ENCODE measurements at regions of chr10 and their contacts with region 1.

Region 1: DNA sequence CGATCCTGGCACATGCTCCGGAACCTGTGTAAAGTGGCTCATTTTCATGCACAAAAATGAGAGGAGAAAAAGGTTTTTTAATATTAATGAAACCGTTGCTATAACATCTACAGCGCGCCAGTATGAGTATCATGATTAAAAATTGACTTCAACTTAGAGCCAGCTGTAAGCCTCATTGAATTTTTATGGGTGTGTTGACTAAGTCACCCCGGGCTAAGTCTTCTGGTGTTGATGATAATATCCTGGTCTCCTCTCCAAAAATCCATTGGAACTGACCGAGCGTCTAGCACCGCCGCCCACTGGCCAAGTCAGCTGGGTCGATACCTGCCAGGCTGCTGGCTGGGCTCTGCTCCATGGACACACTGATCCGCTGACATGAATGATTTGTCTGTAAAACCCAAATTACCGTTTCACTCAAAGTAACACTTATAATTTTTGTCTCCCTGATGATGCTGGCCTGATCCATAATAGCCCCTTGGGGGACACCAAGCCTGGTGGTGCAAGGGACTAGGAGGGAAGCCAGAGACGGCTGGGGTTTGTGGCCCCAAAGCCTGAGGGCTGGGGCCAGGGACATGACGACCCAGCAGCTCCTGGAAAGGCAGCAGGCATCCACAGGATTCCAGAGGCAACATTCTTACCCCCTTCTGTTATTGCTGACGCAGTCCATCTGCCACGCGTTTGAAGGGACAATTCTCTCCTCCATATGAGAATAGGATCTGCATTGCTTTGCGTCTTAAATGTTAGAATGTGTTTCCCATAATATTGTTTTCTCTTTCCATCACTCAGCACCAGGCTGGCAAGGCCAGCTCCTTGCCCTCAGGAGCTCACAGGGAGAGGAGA is 131.0 kb upstream of the PPP2R2D start:
- DNase-seq: no peak
- H3K4me3 ChIP-seq: no peak overlapping the region
- H3K27ac ChIP-seq: no peak overlapping the region
- H3K4me1 ChIP-seq: no peaks in the 10 kb centered on the region
- H3K27me3 ChIP-seq: peaks cover 0 to 26% of the 10 kb centered on the region in 2 donors
- CTCF ChIP-seq: no peak
- POLR2A ChIP-seq: no peak

Region 2: DNA sequence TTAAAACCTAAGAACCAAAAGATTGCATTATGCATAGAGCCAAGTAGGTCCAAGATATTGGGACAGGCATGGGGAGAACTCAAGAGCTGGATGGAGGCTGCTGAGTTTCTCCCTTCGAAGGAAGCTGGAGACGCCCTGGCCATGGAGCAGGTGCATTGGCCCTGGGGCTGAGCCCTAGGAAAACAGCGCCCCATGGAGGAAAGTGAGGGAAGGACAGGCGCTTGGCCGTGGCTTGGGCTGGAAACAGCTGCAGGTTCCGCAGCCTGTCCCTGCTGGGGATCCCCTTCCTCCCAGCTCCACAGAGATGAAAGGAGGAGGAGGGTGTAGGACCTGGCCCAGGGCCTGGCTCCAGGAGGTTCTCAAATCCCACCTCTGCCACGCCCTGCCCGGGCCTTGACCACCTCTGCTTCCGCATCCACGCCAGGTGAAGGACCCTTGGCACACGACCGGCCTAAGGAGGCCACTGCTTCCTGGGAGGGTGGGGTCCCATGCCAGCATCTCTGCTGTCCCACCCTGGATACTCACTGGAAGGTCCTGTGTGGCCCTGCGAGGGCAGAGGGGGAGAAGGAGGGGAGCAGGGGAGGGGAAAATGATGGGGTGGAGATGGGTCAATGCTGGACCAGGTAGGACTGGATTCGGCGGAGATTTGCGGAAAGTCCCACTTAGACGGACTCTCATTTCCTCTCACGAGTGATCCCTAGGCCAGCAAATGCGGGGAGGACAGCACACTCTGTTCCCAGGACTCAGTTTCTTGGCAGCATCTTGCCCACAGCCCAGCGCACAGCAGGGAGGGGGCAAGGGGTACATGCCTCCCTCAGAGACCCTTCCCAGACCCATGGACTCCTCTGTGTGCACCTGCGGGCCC is 199.7 kb before region 1 on chr10:
- intact Hi-C with region 1: loop called (anchors 5 kb)
- DNase-seq: no peak
- H3K4me3 ChIP-seq: no peak overlapping the region
- H3K27ac ChIP-seq: no peak overlapping the region
- H3K4me1 ChIP-seq: no peaks in the 10 kb centered on the region
- H3K27me3 ChIP-seq: peaks cover 0 to 41% of the 10 kb centered on the region in 2 donors
- CTCF ChIP-seq: no peak
- POLR2A ChIP-seq: no peak

Measured in breast epithelium (tissue), 4 donors.